Spleen (tissue), 13 donors: ENCODE measurements at regions of chr9 and their contacts with region 1.

Region 1: GRCh38 chr9:136170006-136170901 is 34.7 kb downstream of the LHX3 start:
- DNase-seq: peak; percentile 88
- H3K4me3 ChIP-seq: no peak overlapping the region
- H3K27ac ChIP-seq: no peak overlapping the region
- H3K4me1 ChIP-seq: peaks cover 0 to 7% (median 0%) of the 10 kb centered on the region in 6 donors
- H3K27me3 ChIP-seq: peaks cover 0 to 47% (median 22%) of the 10 kb centered on the region in 7 donors
- CTCF ChIP-seq: peak; percentile 46 to 84 (median 76)
- POLR2A ChIP-seq: no peak

Region 2: DNA sequence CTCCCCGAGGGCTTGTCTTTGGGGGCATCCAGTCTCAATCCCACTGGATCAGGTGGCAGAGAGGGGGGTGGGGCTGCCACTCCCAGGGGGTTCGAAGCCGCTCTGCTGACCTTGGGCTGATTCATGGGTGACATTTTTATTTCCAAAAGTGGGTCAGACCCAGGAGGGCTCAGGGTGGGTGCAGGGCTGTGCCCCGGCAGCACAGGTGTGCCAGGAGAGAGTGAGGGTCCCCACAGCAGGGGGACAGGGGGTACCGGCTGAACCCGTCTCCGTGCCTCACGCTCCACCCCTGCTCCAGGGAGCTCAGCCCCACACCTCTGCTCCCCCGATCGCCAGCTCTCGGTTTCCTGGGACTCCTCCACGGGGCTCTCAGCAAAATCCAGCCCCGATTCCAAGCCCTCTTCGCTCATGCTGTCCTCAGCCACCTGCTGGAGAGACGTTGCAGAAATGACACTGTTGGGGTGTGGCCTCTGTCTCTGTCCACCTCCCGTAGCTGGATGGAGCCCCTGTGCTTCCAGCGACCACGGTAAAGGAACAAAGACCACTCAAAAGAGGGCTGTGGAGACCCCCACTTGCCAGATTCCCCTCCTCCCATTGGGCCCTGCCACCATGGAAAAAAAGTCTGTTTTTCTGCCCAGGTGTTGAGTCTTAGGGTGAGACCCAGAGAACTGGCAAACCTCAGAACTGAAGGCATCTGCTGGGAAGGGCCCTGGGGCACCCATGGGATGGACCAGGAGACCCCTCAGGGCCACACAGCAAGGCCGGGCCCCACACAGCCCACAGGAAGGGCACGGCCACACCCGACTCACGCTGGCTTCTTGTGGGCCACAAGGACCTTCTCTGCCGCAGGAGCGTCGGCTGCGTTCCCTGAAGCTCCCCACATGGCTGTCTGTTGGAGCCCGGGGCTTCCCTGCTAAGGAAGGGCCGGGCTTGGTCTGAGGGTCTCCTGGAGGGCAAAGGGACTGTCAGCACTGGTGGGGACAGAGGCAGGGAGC is 85.9 kb after region 1 on chr9:
- intact Hi-C with region 1: no loop called
- DNase-seq: no peak
- H3K4me3 ChIP-seq: no peak overlapping the region
- H3K27ac ChIP-seq: no peak overlapping the region
- H3K4me1 ChIP-seq: peaks cover 0 to 17% (median 7%) of the 10 kb centered on the region in 6 donors
- H3K27me3 ChIP-seq: peaks cover 0 to 12% (median 0%) of the 10 kb centered on the region in 7 donors
- CTCF ChIP-seq: no peak
- POLR2A ChIP-seq: no peak

Region 3: DNA sequence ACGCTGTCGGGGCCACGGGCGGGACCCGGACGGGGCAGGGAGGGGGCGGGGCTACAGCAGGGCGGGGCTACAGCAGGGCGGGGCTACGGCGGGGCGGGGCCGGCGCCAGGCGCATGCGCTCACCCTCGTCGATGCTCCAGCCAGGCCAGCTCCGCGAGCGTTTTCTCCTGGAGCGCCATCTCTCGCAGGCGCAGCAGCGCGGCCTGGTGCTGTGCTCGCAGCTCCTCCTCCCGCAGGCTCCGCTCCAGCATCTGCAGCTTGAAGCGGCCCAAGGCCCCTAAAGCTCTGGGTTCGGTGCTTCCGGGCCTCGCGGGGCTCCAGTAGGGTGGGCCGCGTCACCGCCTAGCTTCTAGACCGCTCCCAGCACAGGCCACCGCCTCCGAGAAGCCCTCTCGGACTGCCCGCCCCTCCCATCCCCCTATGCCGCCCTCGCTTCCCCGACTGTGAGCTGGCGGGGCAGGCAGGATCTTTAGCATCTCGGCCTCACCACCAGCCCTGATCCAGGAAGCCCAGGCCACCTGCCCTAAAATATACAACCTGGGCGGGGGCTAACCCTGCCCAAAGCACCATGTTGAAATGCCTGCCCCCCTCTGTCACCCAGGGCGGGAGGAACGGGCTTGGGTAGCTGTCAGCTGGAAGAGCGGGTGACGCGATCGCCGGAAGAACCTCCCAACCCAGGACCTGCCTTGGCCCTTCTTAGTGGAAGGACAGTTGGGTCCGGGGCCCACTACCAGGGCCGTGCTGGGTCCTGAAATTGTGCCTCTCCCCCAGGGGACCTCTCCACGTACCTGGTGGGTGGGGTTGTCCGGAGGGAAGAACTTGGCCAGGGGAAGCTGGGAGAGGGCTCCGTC is 97.2 kb after region 1 on chr9:
- intact Hi-C with region 1: no loop called
- DNase-seq: peak; percentile 95
- H3K4me3 ChIP-seq: peak overlapping the region; percentile 30 to 74 (median 48)
- H3K27ac ChIP-seq: peak overlapping the region in 7 of 8 donors; percentile 59 to 83 (median 75)
- H3K4me1 ChIP-seq: peaks cover 0 to 20% (median 12%) of the 10 kb centered on the region in 6 donors
- H3K27me3 ChIP-seq: peaks cover 0 to 26% (median 0%) of the 10 kb centered on the region in 7 donors
- CTCF ChIP-seq: peak in 7 of 11 experiments; percentile 16 to 53 (median 39)
- POLR2A ChIP-seq: no peak

Region 4: GRCh38 chr9:136283291-136284235 is 113.3 kb after region 1 on chr9:
- intact Hi-C with region 1: loop called (anchors 5 kb)
- DNase-seq: peak; percentile 94
- H3K4me3 ChIP-seq: peak overlapping the region in 7 of 8 donors; percentile 1 to 63 (median 30)
- H3K27ac ChIP-seq: peak overlapping the region in 5 of 8 donors; percentile 16 to 68 (median 62)
- H3K4me1 ChIP-seq: peaks cover 9 to 22% (median 15%) of the 10 kb centered on the region in 6 donors
- H3K27me3 ChIP-seq: peaks cover 0 to 64% (median 24%) of the 10 kb centered on the region in 7 donors
- CTCF ChIP-seq: peak; percentile 84 to 95 (median 91)
- POLR2A ChIP-seq: no peak